ENCODE measurements at regions of chr9 and their contacts with region 1.

Region 1: GRCh38 chr9:75866273-75866871 is 24.1 kb upstream of the PCSK5 start:
- DNase-seq: peak in 1 of 2 experiments; percentile 49
- ATAC-seq: peak; percentile 47 to 78; a peak in 3 of 6 replicates
- H3K4me3 ChIP-seq: no peak overlapping the region
- H3K27ac ChIP-seq: no peak overlapping the region
- H3K4me1 ChIP-seq: no peaks in the 10 kb centered on the region
- CTCF ChIP-seq: peak; percentile 70
- EP300 ChIP-seq: no peak
- POLR2A ChIP-seq: no peak
- RAD21 ChIP-seq: peak; percentile 42 to 45; a peak in 4 of 5 replicates

Region 2: DNA sequence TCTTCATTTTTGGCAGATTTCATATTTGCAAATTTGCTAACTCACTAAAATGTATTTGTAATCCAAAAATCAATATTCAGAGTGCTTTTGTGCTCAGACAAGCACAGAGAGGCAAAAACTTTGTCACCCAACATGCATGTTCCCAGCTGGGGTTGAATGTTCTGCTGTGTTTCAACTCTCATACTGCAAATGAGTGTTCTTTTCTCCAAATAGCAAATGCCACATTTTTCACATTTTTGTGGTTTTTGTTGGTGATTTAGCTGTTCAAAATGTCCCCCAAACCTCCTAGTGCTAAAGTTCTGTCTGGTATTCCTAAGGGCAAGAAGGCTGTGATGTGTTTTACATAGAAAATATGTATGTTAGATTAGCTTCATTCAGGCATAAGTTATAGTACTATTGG is 63.2 kb before region 1 on chr9:
- CTCF ChIA-PET with region 1: no interaction called
- POLR2A ChIA-PET with region 1: no interaction called
- DNase-seq: no peak
- ATAC-seq: no peak
- H3K4me3 ChIP-seq: no peak overlapping the region
- H3K27ac ChIP-seq: no peak overlapping the region
- H3K4me1 ChIP-seq: no peaks in the 10 kb centered on the region
- CTCF ChIP-seq: no peak
- EP300 ChIP-seq: no peak
- POLR2A ChIP-seq: no peak
- RAD21 ChIP-seq: no peak

Region 3: GRCh38 chr9:75880618-75881017 is 14.2 kb after region 1 on chr9:
- CTCF ChIA-PET with region 1: interaction called, 19 read pairs
- POLR2A ChIA-PET with region 1: no interaction called
- DNase-seq: peak in 1 of 2 experiments; percentile 22
- ATAC-seq: peak; percentile 43 to 47; a peak in 4 of 6 replicates
- H3K4me3 ChIP-seq: no peak overlapping the region
- H3K27ac ChIP-seq: no peak overlapping the region
- H3K4me1 ChIP-seq: peaks cover 8% of the 10 kb centered on the region; the same call in 2 of the 3 replicates
- CTCF ChIP-seq: no peak
- EP300 ChIP-seq: no peak
- POLR2A ChIP-seq: no peak
- RAD21 ChIP-seq: no peak

Region 4: DNA sequence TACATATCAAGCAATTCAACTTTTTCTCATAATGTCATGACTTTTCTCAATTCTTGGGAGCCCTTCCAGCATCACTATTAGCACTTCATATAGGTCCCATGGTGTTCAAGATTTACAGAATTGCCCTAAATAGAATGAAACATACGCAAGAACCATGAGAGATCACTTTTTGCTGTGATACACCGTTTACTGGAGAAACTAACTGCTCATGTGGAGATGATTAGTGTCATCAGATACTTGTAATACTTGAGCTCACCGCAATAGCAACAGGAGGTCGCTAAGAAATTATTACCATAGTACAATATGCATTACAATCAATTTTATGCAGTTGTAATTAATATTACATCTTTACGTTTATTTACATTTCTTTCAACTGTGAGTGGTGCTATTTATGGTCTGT is 19.3 kb after region 1 on chr9:
- CTCF ChIA-PET with region 1: interaction called, 19 read pairs
- POLR2A ChIA-PET with region 1: no interaction called
- DNase-seq: no peak
- ATAC-seq: no peak
- H3K4me3 ChIP-seq: no peak overlapping the region
- H3K27ac ChIP-seq: no peak overlapping the region
- H3K4me1 ChIP-seq: peaks cover 7% of the 10 kb centered on the region; the same call in 2 of the 3 replicates
- CTCF ChIP-seq: no peak
- EP300 ChIP-seq: no peak
- POLR2A ChIP-seq: no peak
- RAD21 ChIP-seq: no peak